IMR-90 (cell line): ENCODE measurements at regions of chr7 and their contacts with region 1.

Region 1: DNA sequence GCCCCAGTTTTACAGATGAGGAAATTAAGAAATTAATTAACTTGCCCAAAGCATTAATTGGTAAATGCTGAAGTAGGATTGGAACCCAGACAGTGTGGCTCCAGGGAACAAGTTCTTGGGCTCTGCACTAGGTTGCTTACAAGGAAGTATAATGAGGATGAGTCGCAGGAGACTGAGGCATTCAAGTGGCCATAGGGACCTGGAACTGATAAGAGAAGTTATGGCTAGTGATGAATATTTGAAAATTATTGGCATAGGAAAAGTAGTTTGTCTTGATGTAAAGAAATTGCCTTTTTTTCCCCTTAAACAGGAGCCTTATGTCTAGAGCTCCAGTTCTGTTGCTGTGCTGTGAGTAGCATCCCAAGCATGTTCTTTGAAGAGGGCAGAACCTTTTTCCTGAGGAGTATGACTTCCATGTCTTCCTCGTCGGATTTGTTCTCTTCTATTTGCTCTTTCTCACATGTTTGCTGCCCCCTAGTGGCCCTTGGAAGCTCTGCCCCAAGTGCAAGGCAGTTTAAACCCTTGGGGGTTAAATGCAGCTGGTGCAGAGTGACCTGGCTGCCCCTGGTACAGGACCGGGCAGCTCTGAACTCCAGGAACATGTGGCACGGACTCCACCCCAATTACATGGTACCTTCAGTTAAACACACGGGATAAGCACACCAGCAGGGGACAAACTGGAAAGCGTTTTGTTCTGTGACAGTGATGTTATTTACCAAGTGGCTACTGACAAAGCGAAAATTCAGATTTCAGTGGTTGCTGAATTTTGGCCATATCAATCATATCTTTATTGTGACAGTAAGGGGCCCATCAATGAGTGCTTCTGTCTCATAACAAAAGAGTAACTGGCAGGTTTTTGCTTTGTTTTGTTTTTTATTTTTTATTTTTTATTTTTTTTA is 148.8 kb downstream of the HECW1 start:
- DNase-seq: peak; percentile 84
- ATAC-seq: peak; percentile 97
- H3K4me3 ChIP-seq: no peak overlapping the region
- H3K27ac ChIP-seq: no peak overlapping the region
- H3K4me1 ChIP-seq: no peaks in the 10 kb centered on the region; the same call in 1 of the 2 replicates
- H3K27me3 ChIP-seq: no peaks in the 10 kb centered on the region
- CTCF ChIP-seq: peak; percentile 94
- POLR2A ChIP-seq: no peak
- RAD21 ChIP-seq: peak; percentile 89

Region 2: GRCh38 chr7:42262964-42263363 is 998.3 kb before region 1 on chr7:
- CTCF ChIA-PET with region 1: no interaction called
- POLR2A ChIA-PET with region 1: no interaction called
- dilution Hi-C with region 1: no loop called
- in situ Hi-C with region 1: no loop called
- intact Hi-C with region 1: no loop called
- DNase-seq: peak; percentile 70
- ATAC-seq: peak; percentile 63
- H3K4me3 ChIP-seq: no peak overlapping the region
- H3K27ac ChIP-seq: no peak overlapping the region
- H3K4me1 ChIP-seq: no peaks in the 10 kb centered on the region; the same call in 1 of the 2 replicates
- H3K27me3 ChIP-seq: 0 out of 2 replicates have a peak, but pooled peaks cover 1% of the 10 kb centered on the region
- CTCF ChIP-seq: no peak
- POLR2A ChIP-seq: no peak
- RAD21 ChIP-seq: no peak

Region 3: DNA sequence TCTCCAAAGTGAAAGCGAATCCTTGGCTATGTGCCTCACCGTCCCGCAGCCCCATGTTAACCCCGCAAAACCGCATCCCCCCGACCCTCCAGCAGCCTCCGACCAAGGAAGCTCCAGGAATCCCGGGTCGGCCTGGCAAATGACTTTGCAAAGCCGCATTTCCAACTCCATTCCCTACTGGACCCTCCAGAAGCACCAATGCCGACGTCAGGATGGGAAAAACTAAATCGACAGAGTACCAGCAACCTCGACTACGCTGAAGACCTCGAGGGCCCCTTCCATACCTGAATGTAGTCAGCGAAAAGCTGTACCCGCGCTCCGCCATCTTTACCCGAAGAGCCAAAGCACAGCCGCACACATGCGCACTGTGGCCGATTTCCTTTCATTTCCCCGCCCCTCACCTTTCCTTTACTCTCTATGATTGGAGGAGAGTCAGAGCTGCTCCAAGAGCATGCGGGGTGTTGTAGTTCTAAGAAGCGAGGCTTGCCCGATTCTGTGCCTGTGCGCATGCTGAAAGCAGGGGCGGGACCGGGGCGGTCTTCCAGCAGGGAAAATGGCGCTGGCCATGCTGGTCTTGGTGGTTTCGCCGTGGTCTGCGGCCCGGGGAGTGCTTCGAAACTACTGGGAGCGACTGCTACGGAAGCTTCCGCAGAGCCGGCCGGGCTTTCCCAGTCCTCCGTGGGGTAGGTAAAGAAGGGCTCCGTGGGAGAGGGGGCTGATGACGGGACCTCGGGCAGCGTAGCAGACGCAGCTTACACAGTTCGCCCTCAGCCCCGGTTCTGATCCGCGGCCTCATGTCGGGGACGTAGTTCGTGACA is 329.2 kb before region 1 on chr7 and contains the starts of genes MRPL32 and PSMA2:
- CTCF ChIA-PET with region 1: interaction called, 7 read pairs
- POLR2A ChIA-PET with region 1: no interaction called
- dilution Hi-C with region 1: no loop called
- in situ Hi-C with region 1: loop called (anchors 5 kb)
- intact Hi-C with region 1: loop called (anchors 2 kb)
- DNase-seq: peak; percentile 97
- ATAC-seq: peak; percentile 99
- H3K4me3 ChIP-seq: peak within 1 kb of the TSS; percentile 69
- H3K27ac ChIP-seq: peak within 1 kb of the TSS; percentile 83
- H3K4me1 ChIP-seq: peaks cover 4% of the 10 kb centered on the region
- H3K27me3 ChIP-seq: no peaks in the 10 kb centered on the region
- CTCF ChIP-seq: no peak
- POLR2A ChIP-seq: peak; percentile 81
- RAD21 ChIP-seq: no peak
- total RNA-seq, gene MRPL32: 42.3 and 56.7 TPM in 2 replicates
- total RNA-seq, gene PSMA2: 138 and 217 TPM in 2 replicates

Region 4: GRCh38 chr7:43071604-43072003 is 189.6 kb before region 1 on chr7:
- CTCF ChIA-PET with region 1: no interaction called
- POLR2A ChIA-PET with region 1: interaction called, 3 read pairs
- dilution Hi-C with region 1: no loop called
- in situ Hi-C with region 1: no loop called
- intact Hi-C with region 1: loop called (anchors 2 kb)
- DNase-seq: peak; percentile 1
- ATAC-seq: no peak
- H3K4me3 ChIP-seq: no peak overlapping the region
- H3K27ac ChIP-seq: no peak overlapping the region
- H3K4me1 ChIP-seq: no peaks in the 10 kb centered on the region
- H3K27me3 ChIP-seq: peaks cover 3% of the 10 kb centered on the region
- CTCF ChIP-seq: peak; percentile 37
- POLR2A ChIP-seq: no peak
- RAD21 ChIP-seq: peak; percentile 36

Region 5: DNA sequence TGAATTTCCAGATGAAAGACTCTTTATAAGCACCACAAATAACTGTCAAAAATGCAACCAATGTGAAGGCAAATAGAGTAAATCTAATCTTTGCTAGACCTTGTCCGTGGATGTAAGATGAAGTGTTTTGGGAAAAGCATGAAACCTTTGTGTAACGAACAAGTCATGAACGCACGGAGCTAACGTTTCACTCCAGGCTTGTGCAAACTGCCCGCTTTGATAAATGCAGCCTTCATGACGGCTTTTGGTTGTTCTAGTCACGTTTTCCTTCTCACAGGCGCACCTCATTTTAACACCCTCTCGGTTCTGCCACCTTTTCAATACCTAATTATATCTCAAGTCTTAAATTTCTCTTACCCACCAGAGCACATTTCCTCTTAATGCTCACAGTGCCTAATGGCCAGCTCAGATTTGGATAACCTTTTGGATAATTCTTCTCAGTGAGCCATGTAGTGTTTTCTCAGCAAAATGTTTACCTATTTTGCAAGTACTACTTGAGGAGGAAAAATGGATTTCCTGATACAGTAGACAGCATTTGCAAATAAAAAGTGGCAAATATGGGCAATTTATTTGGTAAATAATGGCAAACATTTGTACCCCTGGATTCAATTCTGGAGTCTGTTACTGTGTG is 85.5 kb before region 1 on chr7:
- CTCF ChIA-PET with region 1: interaction called, 3 read pairs
- POLR2A ChIA-PET with region 1: no interaction called
- dilution Hi-C with region 1: no loop called
- in situ Hi-C with region 1: no loop called
- intact Hi-C with region 1: loop called (anchors 1 kb)
- DNase-seq: no peak
- ATAC-seq: no peak
- H3K4me3 ChIP-seq: no peak overlapping the region
- H3K27ac ChIP-seq: no peak overlapping the region
- H3K4me1 ChIP-seq: no peaks in the 10 kb centered on the region
- H3K27me3 ChIP-seq: peaks cover 9% of the 10 kb centered on the region
- CTCF ChIP-seq: no peak
- POLR2A ChIP-seq: no peak
- RAD21 ChIP-seq: no peak

Region 6: GRCh38 chr7:43700059-43700501 is 438.9 kb after region 1 on chr7:
- CTCF ChIA-PET with region 1: no interaction called
- POLR2A ChIA-PET with region 1: no interaction called
- dilution Hi-C with region 1: no loop called
- in situ Hi-C with region 1: loop called (anchors 25 kb)
- intact Hi-C with region 1: no loop called
- DNase-seq: peak; percentile 82
- ATAC-seq: peak; percentile 32; the same call in 1 of the 2 replicates
- H3K4me3 ChIP-seq: no peak overlapping the region
- H3K27ac ChIP-seq: no peak overlapping the region
- H3K4me1 ChIP-seq: peaks cover 9% of the 10 kb centered on the region
- H3K27me3 ChIP-seq: no peaks in the 10 kb centered on the region
- CTCF ChIP-seq: peak; percentile 89
- POLR2A ChIP-seq: peak; percentile 50; the same call in 1 of the 2 replicates
- RAD21 ChIP-seq: peak; percentile 93